Left cardiac atrium (tissue), 4 donors: ENCODE measurements at regions of chr4 and their contacts with region 1.

Region 1: DNA sequence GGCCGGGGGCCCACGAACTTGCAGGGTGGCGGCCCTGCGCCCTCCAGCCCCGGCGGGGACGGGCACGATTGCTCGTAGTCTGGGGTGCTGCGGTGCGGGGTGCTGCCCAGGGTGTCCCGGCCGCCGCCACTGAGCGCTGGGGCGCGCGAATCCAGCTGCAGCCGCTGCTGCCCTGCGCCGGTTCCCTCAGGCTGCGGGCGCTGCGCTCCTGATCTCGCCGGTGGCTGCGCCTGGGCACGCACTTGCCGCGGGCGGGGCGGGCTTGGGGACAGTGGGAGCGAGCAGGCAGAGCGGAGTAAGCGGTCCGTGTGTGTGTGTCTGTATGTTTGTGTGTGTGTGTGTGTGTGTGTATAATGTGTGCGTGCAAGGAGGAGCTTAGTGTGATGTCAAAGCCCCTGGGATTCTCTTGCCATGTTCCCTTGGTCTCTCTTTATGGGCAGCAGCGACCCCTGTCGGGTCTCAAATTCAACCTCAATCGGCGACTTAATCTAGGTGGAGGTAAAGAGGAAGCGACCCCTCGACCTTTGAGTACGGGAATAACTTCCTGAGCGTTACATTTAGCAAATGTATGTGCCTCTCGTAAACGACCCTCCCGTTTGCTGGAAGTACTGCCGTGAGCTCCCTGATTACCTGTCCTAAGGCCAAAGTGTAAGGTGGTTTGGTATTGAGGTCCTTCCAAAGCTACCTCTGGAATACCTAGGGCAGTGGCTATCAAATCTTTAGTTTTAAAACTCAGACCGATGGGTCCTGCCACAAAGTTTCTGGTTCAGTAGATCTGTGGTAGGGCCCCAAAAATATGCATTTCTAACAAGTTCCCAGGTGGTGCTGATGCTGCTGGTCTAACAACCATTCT is at the start of gene RNF150:
- DNase-seq: peak; percentile 77
- ATAC-seq: peak; percentile 86 to 89
- total RNA-seq, gene RNF150: 38.4 to 40.0 TPM

Region 2: GRCh38 chr4:140861359-140862176 is 271.8 kb before region 1 on chr4:
- intact Hi-C with region 1: loop called (anchors 1 to 5 kb)
- DNase-seq: peak; percentile 50
- ATAC-seq: peak; percentile 60 to 84

Region 3: DNA sequence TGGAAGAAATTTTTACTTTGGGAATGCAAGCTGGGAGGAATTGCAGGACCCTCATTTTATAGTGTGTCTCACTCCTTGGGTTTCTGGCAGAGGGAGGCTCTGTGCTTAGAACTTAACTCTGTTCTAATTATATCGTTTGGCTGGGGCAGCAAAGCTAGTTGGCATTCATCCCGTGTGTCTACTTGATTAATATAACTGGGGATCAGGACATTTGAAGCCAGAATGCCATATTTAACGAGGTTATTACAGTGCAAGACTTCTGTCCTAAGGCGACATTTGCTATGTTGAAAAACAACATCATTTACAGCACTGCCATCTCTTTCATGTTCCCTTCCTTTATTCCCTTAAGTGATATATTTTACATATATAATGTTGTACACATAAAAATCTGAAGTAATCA is 198.1 kb before region 1 on chr4:
- intact Hi-C with region 1: loop called in 1 of 2 experiments (anchors 10 kb)
- DNase-seq: peak; percentile 26
- ATAC-seq: peak; percentile 53 to 81

Region 4: GRCh38 chr4:140947507-140947906 is 185.9 kb before region 1 on chr4:
- intact Hi-C with region 1: no loop called
- DNase-seq: no peak
- ATAC-seq: peak in 1 of 2 donors; percentile 36

Region 5: GRCh38 chr4:140996766-140997165 is 136.6 kb before region 1 on chr4:
- intact Hi-C with region 1: loop called in 1 of 2 experiments (anchors 5 kb)
- DNase-seq: no peak
- ATAC-seq: no peak